ENCODE measurements at regions of chr9 and their contacts with region 1.

Region 1: GRCh38 chr9:76996700-76997099 is 22.8 kb upstream of the FOXB2 start:
- DNase-seq: peak in 1 of 2 experiments; percentile 8
- H3K4me3 ChIP-seq: no peak overlapping the region
- H3K4me3 Mint-ChIP-seq: no peak overlapping the region
- H3K27ac Mint-ChIP-seq: no peak overlapping the region
- H3K4me1 ChIP-seq: no peaks in the 10 kb centered on the region
- H3K4me1 Mint-ChIP-seq: no peaks in the 10 kb centered on the region
- H3K27me3 ChIP-seq: no peaks in the 10 kb centered on the region
- H3K27me3 Mint-ChIP-seq: no peaks in the 10 kb centered on the region
- CTCF ChIP-seq: peak in 1 of 2 experiments; percentile 39

Region 2: GRCh38 chr9:76932757-76933156 is 63.9 kb before region 1 on chr9:
- CTCF ChIA-PET with region 1: no interaction called
- POLR2A ChIA-PET with region 1: no interaction called
- intact Hi-C with region 1: loop called (anchors 2 kb)
- DNase-seq: no peak
- H3K4me3 ChIP-seq: no peak overlapping the region
- H3K4me3 Mint-ChIP-seq: no peak overlapping the region
- H3K27ac Mint-ChIP-seq: no peak overlapping the region
- H3K4me1 ChIP-seq: no peaks in the 10 kb centered on the region
- H3K4me1 Mint-ChIP-seq: no peaks in the 10 kb centered on the region
- H3K27me3 ChIP-seq: no peaks in the 10 kb centered on the region
- H3K27me3 Mint-ChIP-seq: no peaks in the 10 kb centered on the region
- CTCF ChIP-seq: no peak

Measured in Caco-2 (cell line).